HCT116 (cell line): ENCODE measurements at regions of chr5 and their contacts with region 1.

Region 1: DNA sequence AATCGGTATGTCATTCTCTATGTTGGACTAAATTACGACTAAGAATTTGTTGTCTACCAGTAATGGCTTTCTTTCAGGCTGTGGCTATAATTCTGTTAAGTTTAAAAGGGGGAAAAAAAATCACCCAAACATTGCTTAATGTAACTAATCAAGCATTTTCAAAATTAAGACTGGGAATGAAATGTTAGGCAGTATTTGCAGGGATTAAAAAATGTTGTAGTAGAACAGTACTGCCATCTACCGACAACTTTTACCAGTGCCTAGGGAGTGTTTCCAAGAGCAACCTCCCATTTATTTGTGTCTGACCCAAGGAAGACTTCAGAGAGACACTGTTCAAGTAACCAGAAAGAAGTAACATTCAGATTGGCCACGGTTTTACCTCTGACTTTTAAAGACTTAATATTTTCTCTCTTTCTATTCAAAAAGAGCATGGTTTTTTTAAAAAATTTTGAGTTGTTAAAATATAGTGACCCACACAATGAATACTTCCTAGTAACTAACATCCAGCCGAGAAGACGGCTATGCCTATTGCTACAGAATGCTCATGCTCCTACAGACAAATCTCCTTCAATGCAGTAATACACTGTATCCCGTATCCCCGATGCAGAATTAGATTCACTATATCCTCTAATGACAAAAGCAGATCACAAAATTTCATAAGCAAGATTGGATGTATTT is 92.4 kb downstream of the ARL15 start:
- DNase-seq: peak; percentile 39
- ATAC-seq: peak; percentile 83
- H3K4me3 ChIP-seq: no peak overlapping the region
- H3K27ac ChIP-seq: no peak overlapping the region
- H3K4me1 ChIP-seq: no peaks in the 10 kb centered on the region
- H3K27me3 ChIP-seq: no peaks in the 10 kb centered on the region
- CTCF ChIP-seq: peak; percentile 50 to 76 (median 64); a peak in 5 of 6 replicates
- POLR2A ChIP-seq: no peak
- RAD21 ChIP-seq: peak; percentile 76

Region 2: DNA sequence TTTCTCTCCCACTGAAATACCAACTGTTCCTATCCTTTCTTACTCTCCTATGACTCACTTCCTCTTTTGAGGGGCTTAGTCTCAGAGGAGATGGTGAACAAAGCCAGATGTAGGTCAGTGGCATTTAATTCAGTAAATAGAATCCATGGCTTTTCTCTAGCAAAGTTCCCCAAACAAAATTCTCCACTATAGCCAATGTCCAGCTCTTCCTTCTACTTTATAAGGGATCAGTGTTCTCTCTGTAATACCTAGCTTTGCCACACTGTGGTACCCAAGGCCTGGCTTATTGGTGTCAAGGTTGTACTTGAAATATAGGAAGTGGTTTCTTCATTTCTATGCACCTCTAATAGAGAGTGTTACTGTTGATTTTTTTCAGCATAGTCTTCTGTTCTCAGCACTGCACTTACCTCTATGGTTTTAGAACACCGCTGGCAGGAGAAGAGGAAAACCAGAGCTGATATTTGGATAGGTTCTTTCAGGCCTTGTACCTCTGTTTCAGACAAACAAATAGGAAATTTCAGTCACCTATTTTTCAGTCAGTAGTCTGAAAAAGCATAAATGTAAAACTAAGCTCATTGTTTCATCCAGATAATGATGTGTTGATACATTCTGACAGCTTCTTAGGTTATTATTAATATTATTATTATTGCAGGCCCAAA is 1269.4 kb before region 1 on chr5:
- CTCF ChIA-PET with region 1: no interaction called
- POLR2A ChIA-PET with region 1: no interaction called
- RAD21 ChIA-PET with region 1: no interaction called
- intact Hi-C with region 1: loop called (anchors 5 kb)
- DNase-seq: peak; percentile 71
- ATAC-seq: peak; percentile 99
- H3K4me3 ChIP-seq: no peak overlapping the region
- H3K27ac ChIP-seq: no peak overlapping the region
- H3K4me1 ChIP-seq: peaks cover 0 to 6% of the 10 kb centered on the region in 2 experiments; a peak in 1 of 4 replicates
- H3K27me3 ChIP-seq: no peaks in the 10 kb centered on the region
- CTCF ChIP-seq: peak; percentile 77 to 92 (median 90)
- POLR2A ChIP-seq: no peak
- RAD21 ChIP-seq: peak; percentile 94

Region 3: GRCh38 chr5:53170748-53171349 is 1047.1 kb before region 1 on chr5:
- CTCF ChIA-PET with region 1: no interaction called
- POLR2A ChIA-PET with region 1: no interaction called
- RAD21 ChIA-PET with region 1: no interaction called
- intact Hi-C with region 1: loop called (anchors 2 kb)
- DNase-seq: peak; percentile 32
- ATAC-seq: peak; percentile 83
- H3K4me3 ChIP-seq: no peak overlapping the region
- H3K27ac ChIP-seq: no peak overlapping the region
- H3K4me1 ChIP-seq: no peaks in the 10 kb centered on the region
- H3K27me3 ChIP-seq: no peaks in the 10 kb centered on the region
- CTCF ChIP-seq: peak; percentile 54 to 74 (median 57); a peak in 5 of 6 replicates
- POLR2A ChIP-seq: no peak
- RAD21 ChIP-seq: peak; percentile 76

Region 4: GRCh38 chr5:53425598-53426511 is 792.1 kb before region 1 on chr5:
- CTCF ChIA-PET with region 1: interaction called, 4 read pairs
- POLR2A ChIA-PET with region 1: no interaction called
- RAD21 ChIA-PET with region 1: no interaction called
- intact Hi-C with region 1: loop called (anchors 1 kb)
- DNase-seq: peak; percentile 45
- ATAC-seq: peak; percentile 77
- H3K4me3 ChIP-seq: no peak overlapping the region
- H3K27ac ChIP-seq: no peak overlapping the region
- H3K4me1 ChIP-seq: peaks cover 0 to 2% of the 10 kb centered on the region in 2 experiments; a peak in 1 of 4 replicates
- H3K27me3 ChIP-seq: no peaks in the 10 kb centered on the region
- CTCF ChIP-seq: peak; percentile 44 to 67 (median 65); a peak in 5 of 6 replicates
- POLR2A ChIP-seq: no peak
- RAD21 ChIP-seq: peak; percentile 74

Region 5: GRCh38 chr5:53726121-53726520 is 491.8 kb before region 1 on chr5:
- CTCF ChIA-PET with region 1: no interaction called
- POLR2A ChIA-PET with region 1: no interaction called
- RAD21 ChIA-PET with region 1: no interaction called
- intact Hi-C with region 1: no loop called
- DNase-seq: no peak
- ATAC-seq: no peak
- H3K4me3 ChIP-seq: no peak overlapping the region
- H3K27ac ChIP-seq: no peak overlapping the region
- H3K4me1 ChIP-seq: no peaks in the 10 kb centered on the region
- H3K27me3 ChIP-seq: no peaks in the 10 kb centered on the region
- CTCF ChIP-seq: no peak
- POLR2A ChIP-seq: no peak
- RAD21 ChIP-seq: no peak

Region 6: DNA sequence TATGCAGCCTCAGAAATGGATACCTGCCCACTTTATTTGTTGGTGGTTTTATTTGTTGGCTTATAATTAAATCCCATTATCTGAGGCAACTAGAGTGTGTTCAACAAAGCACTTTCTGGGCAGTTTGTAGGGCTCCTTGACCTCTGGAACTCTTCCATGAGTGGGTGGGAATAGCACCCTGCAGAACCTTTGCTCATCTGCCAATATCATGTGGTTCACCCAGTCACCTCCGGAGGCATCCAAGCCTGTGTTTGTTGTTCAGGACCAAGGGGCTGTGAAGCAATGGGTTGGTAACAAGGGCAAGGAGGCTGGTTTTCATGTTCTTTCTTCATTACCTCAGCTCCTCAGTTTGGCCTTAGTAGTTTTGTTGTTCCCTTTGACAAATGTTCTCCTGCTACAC is 343.6 kb before region 1 on chr5:
- CTCF ChIA-PET with region 1: no interaction called
- POLR2A ChIA-PET with region 1: no interaction called
- RAD21 ChIA-PET with region 1: no interaction called
- intact Hi-C with region 1: loop called (anchors 5 kb)
- DNase-seq: no peak
- ATAC-seq: peak; percentile 76
- H3K4me3 ChIP-seq: no peak overlapping the region
- H3K27ac ChIP-seq: no peak overlapping the region
- H3K4me1 ChIP-seq: no peaks in the 10 kb centered on the region
- H3K27me3 ChIP-seq: no peaks in the 10 kb centered on the region
- CTCF ChIP-seq: peak in 2 of 3 experiments; percentile 18 to 25; a peak in 2 of 6 replicates
- POLR2A ChIP-seq: no peak
- RAD21 ChIP-seq: no peak

Region 7: DNA sequence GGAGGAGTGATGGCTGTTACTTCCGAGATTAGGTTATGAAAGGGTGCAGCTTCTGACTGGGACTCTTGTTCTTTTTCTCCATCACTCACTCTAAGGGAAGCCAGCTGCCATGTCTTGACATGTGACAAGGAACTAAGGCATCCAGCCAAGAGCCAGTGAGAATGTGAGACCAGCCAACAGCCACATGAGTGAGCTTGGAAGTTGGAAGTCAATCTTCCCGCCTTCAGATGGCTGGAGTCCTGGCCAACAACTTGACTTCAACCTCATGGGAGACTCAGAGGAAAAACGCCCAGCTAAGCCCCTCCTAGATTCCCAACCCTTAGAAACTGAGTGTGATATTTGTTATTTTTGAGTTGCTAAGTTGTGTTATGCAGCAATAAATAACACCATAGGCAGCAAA is 500.7 kb after region 1 on chr5:
- CTCF ChIA-PET with region 1: no interaction called
- POLR2A ChIA-PET with region 1: no interaction called
- RAD21 ChIA-PET with region 1: no interaction called
- intact Hi-C with region 1: no loop called
- DNase-seq: no peak
- ATAC-seq: no peak
- H3K4me3 ChIP-seq: no peak overlapping the region
- H3K27ac ChIP-seq: no peak overlapping the region
- H3K4me1 ChIP-seq: peaks cover 0 to 6% of the 10 kb centered on the region in 2 experiments; a peak in 2 of 4 replicates
- H3K27me3 ChIP-seq: no peaks in the 10 kb centered on the region
- CTCF ChIP-seq: no peak
- POLR2A ChIP-seq: no peak
- RAD21 ChIP-seq: no peak